Activated CD4-positive, alpha-beta T cell treated with anti-CD3 and anti-CD28 coated beads, Interleukin-2, amount 10 ng/mL, durations not matched to agents 24 days and 14 days (primary cell): ENCODE measurements at regions of chr14 and their contacts with region 1.

Region 1: DNA sequence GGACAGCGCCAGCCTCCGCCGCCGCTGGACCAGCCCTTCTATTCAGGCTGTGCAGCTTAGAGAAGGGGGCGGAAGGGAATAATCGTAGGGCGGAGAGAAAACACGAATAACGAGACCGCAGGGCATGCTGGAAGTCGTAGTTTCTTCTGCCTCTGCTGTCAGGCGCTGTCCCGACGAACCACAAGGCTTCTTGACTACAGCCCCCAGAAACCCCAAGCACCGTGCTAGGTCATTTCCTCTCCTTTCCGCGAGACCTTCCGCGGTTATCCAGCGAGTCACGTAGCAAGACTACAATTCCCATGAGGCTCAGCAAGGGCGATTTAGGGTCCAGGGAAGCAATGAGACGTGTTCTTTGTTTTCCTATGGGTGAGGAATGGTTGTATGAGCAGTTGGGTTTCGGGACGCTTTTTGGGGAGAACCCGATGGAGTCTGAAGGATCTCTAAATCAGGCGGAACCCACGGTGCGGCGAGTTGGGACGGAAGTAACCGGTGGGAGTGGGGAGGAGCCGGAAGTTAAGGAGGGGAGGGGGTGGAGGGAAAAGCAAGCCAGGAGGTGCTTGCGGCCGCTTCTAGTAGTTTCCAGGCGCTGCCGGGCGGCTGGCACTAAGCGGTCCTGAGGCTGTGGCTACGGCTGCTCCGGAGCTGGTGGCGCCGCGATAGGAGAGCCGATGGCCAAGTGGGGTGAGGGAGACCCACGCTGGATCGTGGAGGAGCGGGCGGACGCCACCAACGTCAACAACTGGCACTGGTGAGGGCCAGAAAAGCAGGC is at the starts of genes AHSA1 and VIPAS39:
- DNase-seq: peak; percentile 98
- H3K4me3 Mint-ChIP-seq: peak within 1 kb of the TSS; percentile 100
- H3K27ac Mint-ChIP-seq: peak within 1 kb of the TSS; percentile 100
- H3K4me1 Mint-ChIP-seq: peaks cover 27% of the 10 kb centered on the region
- H3K27me3 Mint-ChIP-seq: no peaks in the 10 kb centered on the region
- total RNA-seq, gene AHSA1: 418 and 441 TPM in 2 replicates
- total RNA-seq, gene VIPAS39: 17.7 and 18.5 TPM in 2 replicates

Region 2: DNA sequence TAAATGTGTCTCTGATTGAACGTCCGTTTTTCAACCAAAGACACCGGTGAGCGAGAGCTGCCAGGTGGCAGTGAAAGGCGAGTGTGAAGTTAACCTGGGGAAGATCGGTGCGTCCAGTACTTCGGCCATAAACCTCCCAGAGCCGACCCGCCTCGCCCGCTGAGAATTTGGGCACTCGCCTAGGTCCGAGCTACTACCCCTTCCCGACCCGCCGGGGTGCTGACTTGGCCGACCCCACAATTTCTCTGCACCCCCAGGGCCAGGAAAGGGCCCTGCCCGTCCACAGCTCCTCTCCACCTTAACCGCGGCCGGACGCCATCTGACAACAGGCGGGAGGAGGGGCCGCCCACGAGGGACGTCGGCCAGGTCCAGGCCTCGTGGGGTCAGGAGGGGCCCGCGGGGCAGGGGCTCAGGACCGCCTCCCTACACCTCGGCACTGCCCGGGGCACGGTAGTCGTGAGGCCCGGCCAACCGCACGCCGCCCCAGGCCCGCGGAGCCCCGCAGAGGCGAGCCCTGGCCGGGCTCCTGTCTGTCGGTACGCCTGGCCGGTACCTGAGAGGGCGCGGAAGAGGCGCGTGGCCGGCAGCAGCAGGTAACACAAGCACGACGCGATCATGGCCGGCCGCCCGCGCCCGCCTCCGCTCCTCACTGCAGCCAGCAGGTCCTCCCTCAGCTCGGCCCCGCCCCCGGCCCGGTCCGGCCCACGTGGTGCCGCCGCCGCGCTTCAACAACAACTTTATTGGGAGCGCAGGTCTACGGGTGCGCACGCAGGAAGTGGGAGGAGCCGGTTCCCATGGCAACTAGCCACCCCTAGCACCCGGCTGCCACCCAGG is 645.3 kb before region 1 on chr14 and contains the start of gene ANGEL1:
- intact Hi-C with region 1: loop called (anchors 5 kb)
- DNase-seq: peak; percentile 99
- H3K4me3 Mint-ChIP-seq: peak within 1 kb of the TSS; percentile 98
- H3K27ac Mint-ChIP-seq: peak within 1 kb of the TSS; percentile 91
- H3K4me1 Mint-ChIP-seq: peaks cover 21% of the 10 kb centered on the region
- H3K27me3 Mint-ChIP-seq: no peaks in the 10 kb centered on the region
- total RNA-seq, gene ANGEL1: 16.4 and 17.2 TPM in 2 replicates

Region 3: GRCh38 chr14:77301103-77301502 is 156.6 kb before region 1 on chr14:
- intact Hi-C with region 1: loop called (anchors 1 kb)
- DNase-seq: peak; percentile 88
- H3K4me3 Mint-ChIP-seq: no peak overlapping the region
- H3K27ac Mint-ChIP-seq: no peak overlapping the region
- H3K4me1 Mint-ChIP-seq: peaks cover 22% of the 10 kb centered on the region
- H3K27me3 Mint-ChIP-seq: no peaks in the 10 kb centered on the region

Region 4: GRCh38 chr14:77554207-77554606 is 96.5 kb after region 1 on chr14:
- intact Hi-C with region 1: loop called (anchors 2 kb)
- DNase-seq: peak; percentile 72
- H3K4me3 Mint-ChIP-seq: peak overlapping the region; percentile 70
- H3K27ac Mint-ChIP-seq: peak overlapping the region; percentile 84
- H3K4me1 Mint-ChIP-seq: peaks cover 19% of the 10 kb centered on the region
- H3K27me3 Mint-ChIP-seq: no peaks in the 10 kb centered on the region

Region 5: DNA sequence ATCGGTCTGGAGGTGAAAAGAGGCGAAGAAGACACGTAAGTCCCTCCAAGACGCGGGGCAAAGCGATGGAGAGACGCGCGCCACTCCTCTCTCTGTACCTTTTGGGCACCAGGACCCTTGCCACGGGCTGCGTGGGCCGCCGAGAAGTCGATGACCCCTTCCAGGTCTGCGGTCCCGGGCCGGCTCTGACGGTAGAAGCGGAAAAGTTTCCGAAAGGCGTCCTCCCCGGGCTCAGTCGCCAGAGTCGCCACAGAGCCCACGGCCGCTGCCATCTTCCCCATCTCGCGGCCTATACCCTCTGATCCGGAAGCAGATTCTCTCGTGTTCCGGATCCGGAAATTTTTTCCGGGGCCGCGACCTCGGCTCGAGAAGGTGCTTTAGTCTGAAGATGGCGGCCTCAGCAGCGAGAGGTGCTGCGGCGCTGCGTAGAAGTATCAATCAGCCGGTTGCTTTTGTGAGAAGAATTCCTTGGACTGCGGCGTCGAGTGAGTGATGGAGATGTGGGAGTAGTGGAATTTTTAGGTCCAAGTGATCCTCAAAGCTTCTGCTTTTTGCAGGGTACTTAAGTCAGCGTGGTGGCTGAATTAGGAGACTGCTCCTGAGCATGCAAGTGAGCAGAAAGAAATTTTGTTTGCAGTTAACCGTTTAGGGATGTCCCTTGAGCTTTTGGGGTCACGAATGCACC is 250.2 kb after region 1 on chr14 and contains the starts of genes ALKBH1 and SLIRP:
- intact Hi-C with region 1: loop called (anchors 1 kb)
- DNase-seq: peak; percentile 97
- H3K4me3 Mint-ChIP-seq: peak within 1 kb of the TSS; percentile 82
- H3K27ac Mint-ChIP-seq: peak within 1 kb of the TSS; percentile 91
- H3K4me1 Mint-ChIP-seq: peaks cover 29% of the 10 kb centered on the region
- H3K27me3 Mint-ChIP-seq: no peaks in the 10 kb centered on the region
- total RNA-seq, gene ALKBH1: 17.9 and 19.2 TPM in 2 replicates
- total RNA-seq, gene SLIRP: 184 and 190 TPM in 2 replicates

Region 6: DNA sequence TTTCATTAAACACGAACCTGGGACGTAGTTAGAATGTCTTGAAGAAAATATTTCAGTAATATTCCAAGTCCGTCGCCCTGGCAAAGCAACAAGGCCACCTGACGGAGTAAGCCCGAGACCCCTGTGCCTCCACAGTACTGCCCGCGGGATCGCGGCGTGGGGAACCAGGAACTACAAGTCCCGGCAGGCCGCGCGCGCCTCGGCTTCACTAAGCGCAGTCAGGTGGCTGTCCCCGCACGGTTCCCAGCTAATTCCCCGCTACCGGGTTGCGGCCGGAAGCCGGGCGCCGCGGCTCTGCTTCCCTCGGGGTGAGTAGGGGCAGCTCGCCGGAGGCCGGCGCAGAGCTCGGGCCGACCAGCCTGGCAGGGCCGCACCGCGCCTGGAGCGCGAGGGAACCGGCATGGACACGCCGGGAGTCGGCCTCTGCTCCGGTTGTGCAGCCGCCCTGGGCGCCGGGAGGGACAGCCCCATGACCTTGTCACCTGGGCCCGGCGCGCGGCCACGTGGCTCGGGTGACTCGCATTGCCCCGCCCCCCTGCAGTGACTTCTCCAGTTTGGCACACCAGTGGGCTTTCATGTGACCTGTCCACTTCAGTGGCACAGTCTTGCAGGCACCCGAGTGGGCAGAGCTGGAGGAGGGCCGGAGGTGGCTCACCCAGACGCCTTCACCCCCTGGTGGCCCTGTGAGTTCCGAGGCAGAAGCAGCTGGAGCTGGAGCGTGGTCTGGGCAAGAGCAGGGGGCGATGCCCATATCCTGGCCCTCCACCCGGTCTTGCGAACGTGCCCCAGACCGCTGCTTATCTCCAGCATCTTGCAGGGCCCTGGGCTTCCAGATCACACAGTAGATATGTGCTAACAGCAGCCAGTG is 342.4 kb after region 1 on chr14 and contains the start of gene ADCK1:
- intact Hi-C with region 1: loop called (anchors 1 kb)
- DNase-seq: peak; percentile 96
- H3K4me3 Mint-ChIP-seq: peak within 1 kb of the TSS; percentile 88
- H3K27ac Mint-ChIP-seq: peak within 1 kb of the TSS; percentile 88
- H3K4me1 Mint-ChIP-seq: peaks cover 7% of the 10 kb centered on the region
- H3K27me3 Mint-ChIP-seq: no peaks in the 10 kb centered on the region
- total RNA-seq, gene ADCK1: 4.9 and 5.3 TPM in 2 replicates